OCI-LY7 (cell line): ENCODE measurements at regions of chr5 and their contacts with region 1.

Region 1: DNA sequence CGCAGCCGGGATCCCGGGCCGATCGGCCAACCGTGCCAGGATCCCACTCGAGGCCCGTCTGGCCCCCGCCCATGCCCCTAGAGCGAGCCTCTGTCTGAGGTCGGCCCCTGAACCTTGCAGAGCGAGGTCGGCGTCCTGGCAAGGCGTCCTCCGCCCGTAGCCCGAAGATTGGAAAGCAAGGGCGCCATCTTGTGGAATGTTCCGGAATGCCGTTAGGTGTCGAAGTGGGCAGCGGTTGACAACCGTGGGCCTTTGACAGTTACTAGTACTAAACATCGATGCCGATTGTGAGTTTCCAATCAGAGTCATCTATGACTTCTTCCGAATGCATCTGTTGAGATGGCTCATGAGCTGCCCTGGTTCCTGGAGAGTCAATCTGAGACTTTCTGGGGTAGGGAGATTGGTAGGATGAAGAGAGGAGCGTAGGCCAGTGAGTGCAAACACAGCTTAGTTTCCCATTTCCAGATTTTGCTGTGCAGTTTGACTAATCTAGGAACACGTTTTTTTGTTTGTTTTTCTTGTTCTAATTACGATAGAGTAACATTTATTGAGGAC is 923 bp upstream of the PLK2 start:
- DNase-seq: peak; percentile 14
- H3K4me3 ChIP-seq: no peak overlapping the region
- H3K27ac ChIP-seq: no peak overlapping the region
- H3K4me1 ChIP-seq: no peaks in the 10 kb centered on the region
- CTCF ChIP-seq: peak; percentile 78

Region 2: DNA sequence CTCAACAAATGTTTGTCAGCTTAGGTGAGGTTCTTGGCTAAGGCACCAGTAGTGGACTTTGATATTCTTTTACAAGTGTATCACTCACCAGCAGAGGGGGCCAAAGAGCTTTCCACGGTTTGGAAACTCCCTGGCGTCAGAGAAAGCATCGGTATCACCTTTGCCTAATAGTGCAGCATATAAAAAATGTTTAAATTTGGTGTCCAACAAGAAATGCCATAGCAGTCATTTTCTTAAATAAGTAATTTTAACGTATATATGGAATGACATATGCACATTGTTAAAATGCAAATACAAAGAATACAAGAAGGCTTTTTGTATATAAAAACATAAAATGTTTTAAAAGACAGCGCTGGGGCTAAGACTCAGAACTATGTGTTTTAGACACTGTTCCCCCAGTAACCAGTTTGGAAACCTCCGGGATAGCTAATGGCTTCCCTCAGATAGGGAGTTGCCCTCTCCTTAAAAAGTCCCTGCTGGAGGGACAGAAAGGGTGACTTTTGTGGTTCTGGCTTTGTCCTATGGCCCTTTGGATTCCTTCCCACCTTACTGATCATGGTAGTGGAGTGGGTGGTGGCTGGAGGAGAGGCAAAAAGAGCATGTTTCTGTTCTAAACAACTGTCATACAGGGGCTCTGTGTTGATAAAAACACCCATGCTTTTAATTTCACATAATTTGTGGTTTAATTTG is 1162.4 kb before region 1 on chr5:
- CTCF ChIA-PET with region 1: interaction called, 3 read pairs
- POLR2A ChIA-PET with region 1: no interaction called
- intact Hi-C with region 1: loop called (anchors 2 kb)
- DNase-seq: peak; percentile 85
- H3K4me3 ChIP-seq: no peak overlapping the region
- H3K27ac ChIP-seq: no peak overlapping the region
- H3K4me1 ChIP-seq: peaks cover 11% of the 10 kb centered on the region
- CTCF ChIP-seq: peak; percentile 86

Region 3: GRCh38 chr5:57499262-57500050 is 961.4 kb before region 1 on chr5:
- CTCF ChIA-PET with region 1: no interaction called
- POLR2A ChIA-PET with region 1: no interaction called
- intact Hi-C with region 1: loop called (anchors 10 kb)
- DNase-seq: peak; percentile 11
- H3K4me3 ChIP-seq: no peak overlapping the region
- H3K27ac ChIP-seq: no peak overlapping the region
- H3K4me1 ChIP-seq: no peaks in the 10 kb centered on the region
- CTCF ChIP-seq: peak; percentile 78

Region 4: DNA sequence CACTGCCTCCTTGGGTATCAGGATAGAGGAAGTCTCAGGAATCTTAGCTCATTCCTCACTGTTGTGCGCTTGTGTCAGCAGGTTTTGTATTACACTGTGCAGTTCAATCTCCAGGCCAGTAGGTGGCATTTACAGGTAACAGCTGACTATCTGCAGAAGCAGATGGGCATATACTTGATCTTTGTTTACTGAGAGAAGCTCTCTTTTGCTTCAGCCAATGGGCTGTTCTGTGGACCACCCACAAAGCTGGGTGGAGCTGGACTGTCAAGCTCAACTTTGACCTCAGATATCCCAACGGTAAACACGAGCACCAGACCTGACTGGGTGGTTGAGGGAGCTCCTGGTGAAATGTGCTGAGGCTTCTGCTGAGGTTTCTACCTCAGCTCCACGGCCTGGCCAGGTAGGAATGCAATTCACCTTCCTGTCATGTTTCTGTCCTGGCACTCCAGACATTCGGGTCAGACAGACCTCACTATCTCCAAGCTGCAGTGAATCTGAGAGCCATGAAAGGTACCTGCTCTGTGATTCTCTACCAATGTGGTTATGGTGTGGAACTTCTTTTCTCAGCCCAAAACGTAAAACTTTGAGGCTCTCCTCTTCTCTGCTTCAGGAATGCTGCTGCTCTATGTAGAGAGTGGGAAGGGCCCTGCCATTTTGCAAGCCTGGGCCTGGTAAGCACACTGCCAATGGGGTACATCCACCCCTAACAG is 810.3 kb before region 1 on chr5:
- CTCF ChIA-PET with region 1: no interaction called
- POLR2A ChIA-PET with region 1: no interaction called
- intact Hi-C with region 1: loop called (anchors 2 kb)
- DNase-seq: peak; percentile 29
- H3K4me3 ChIP-seq: no peak overlapping the region
- H3K27ac ChIP-seq: no peak overlapping the region
- H3K4me1 ChIP-seq: no peaks in the 10 kb centered on the region
- CTCF ChIP-seq: peak; percentile 82

Region 5: DNA sequence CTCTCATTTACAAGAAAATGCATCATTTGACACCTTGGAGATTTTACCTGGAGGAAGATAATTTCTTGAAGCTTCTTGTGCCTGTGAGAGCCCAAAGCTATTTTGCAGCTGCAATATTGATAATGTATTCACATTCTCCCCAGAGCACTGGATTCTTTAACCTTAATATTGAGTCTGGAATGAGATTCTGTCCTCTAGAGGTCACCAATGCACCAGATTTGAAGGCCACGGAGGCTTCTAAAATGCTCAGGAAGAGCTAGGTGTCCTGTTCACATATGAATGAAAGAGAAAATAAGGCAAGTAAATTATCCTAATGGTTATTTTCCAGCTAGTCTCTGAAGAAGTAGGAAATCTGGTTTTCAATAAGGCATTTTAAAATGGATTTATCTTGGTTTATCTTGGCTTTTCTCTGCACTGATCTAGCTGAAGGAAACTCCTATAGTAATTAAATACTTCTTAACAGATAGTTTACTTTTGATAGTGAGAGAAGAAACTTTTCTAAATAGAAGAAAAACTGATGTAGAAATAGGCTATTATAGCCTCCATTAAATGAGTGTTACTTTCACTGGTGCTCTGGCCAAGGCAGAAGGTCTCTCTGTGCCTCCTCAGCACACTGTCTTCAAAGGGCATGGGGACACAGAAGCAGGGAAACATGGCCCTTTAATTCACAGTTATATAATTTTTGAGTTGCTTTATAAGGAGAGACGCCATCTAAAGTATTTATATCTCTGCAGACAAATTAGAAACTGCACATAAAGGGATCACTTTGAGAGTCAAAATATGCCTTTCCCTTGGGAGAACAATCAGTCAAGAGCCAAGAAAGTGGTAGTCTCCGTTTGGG is 681.2 kb before region 1 on chr5:
- CTCF ChIA-PET with region 1: no interaction called
- POLR2A ChIA-PET with region 1: no interaction called
- intact Hi-C with region 1: loop called (anchors 1 kb)
- DNase-seq: peak; percentile 34
- H3K4me3 ChIP-seq: no peak overlapping the region
- H3K27ac ChIP-seq: no peak overlapping the region
- H3K4me1 ChIP-seq: no peaks in the 10 kb centered on the region
- CTCF ChIP-seq: peak; percentile 75

Region 6: GRCh38 chr5:57986761-57987341 is 474.0 kb before region 1 on chr5:
- CTCF ChIA-PET with region 1: no interaction called
- POLR2A ChIA-PET with region 1: no interaction called
- intact Hi-C with region 1: no loop called
- DNase-seq: no peak
- H3K4me3 ChIP-seq: no peak overlapping the region
- H3K27ac ChIP-seq: no peak overlapping the region
- H3K4me1 ChIP-seq: no peaks in the 10 kb centered on the region
- CTCF ChIP-seq: no peak

Region 7: GRCh38 chr5:58410441-58410840 is 50.4 kb before region 1 on chr5:
- CTCF ChIA-PET with region 1: no interaction called
- POLR2A ChIA-PET with region 1: no interaction called
- intact Hi-C with region 1: no loop called
- DNase-seq: no peak
- H3K4me3 ChIP-seq: no peak overlapping the region
- H3K27ac ChIP-seq: no peak overlapping the region
- H3K4me1 ChIP-seq: no peaks in the 10 kb centered on the region
- CTCF ChIP-seq: no peak